Naive thymus-derived CD4-positive, alpha-beta T cell (primary cell): ENCODE measurements at regions of chr10 and their contacts with region 1.

Region 1: DNA sequence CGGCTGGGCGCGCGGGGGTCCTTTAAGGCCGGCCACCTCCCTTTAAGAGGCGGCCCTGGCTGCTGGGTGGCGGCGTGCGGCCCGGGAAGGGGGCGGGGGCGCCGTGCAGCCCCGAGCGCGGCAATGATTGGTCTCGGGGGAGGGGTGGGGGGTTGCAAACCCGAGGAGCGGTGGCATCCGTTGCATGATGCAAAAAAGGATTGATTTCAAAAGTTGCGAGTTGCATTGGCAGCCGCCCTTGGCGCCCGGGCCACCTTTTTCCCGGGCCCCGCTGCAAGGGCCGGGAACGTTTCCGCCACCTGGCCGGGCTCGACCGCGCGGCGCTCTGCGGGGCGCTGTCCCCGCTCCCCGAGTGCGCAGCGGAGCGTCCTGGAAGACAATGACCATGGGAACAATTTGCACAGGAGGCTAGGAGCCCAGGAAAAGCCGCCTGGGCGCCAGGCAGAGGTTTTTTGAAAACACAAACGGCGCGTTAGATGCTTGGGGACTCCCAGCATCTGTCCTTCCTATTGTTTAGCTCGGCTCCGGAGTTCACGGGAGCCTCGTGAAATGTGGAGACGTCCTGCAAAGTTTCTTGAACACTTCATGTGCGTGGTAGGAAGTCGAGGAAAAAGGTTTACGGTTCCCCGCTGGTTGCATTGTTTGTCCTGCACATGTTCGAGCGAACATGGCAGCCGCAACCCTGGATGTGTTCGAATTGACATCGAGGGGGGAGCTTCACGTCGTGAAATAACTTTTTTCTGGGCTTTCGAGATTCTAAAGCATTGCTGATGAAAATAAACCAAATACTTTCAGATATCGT is at the start of gene SEPHS1:
- DNase-seq: peak; percentile 62 to 87 (median 84)
- ATAC-seq: peak; percentile 83
- H3K4me3 ChIP-seq: peak within 1 kb of the TSS; percentile 95
- H3K4me3 Mint-ChIP-seq: peak within 1 kb of the TSS; percentile 92 to 99 (median 96)
- H3K27ac ChIP-seq: peak within 1 kb of the TSS; percentile 84
- H3K27ac Mint-ChIP-seq: peak within 1 kb of the TSS; percentile 90 to 98 (median 97)
- H3K4me1 ChIP-seq: peaks cover 18 to 36% of the 10 kb centered on the region in 2 donors
- H3K4me1 Mint-ChIP-seq: peaks cover 28 to 69% (median 62%) of the 10 kb centered on the region in 7 donors
- H3K27me3 ChIP-seq: no peaks in the 10 kb centered on the region
- H3K27me3 Mint-ChIP-seq: peaks cover 0 to 9% (median 0%) of the 10 kb centered on the region in 5 donors
- total RNA-seq, gene SEPHS1: 23.7 to 57.3 (median 36.5) TPM

Region 2: GRCh38 chr10:12129222-12130111 is 1219.0 kb before region 1 on chr10 and contains the start of gene SEC61A2:
- CTCF ChIA-PET with region 1: no interaction called
- POLR2A ChIA-PET with region 1: interaction called, 4 read pairs
- intact Hi-C with region 1: loop called in 1 of 2 experiments (anchors 5 kb)
- DNase-seq: peak; percentile 89 to 100 (median 95)
- ATAC-seq: peak; percentile 96
- H3K4me3 ChIP-seq: peak within 1 kb of the TSS; percentile 48
- H3K4me3 Mint-ChIP-seq: peak within 1 kb of the TSS; percentile 83 to 93 (median 89)
- H3K27ac ChIP-seq: peak within 1 kb of the TSS; percentile 85
- H3K27ac Mint-ChIP-seq: peak within 1 kb of the TSS; percentile 52 to 93 (median 83)
- H3K4me1 ChIP-seq: peaks cover 5 to 12% of the 10 kb centered on the region in 2 donors
- H3K4me1 Mint-ChIP-seq: peaks cover 12 to 35% (median 26%) of the 10 kb centered on the region in 7 donors
- H3K27me3 ChIP-seq: no peaks in the 10 kb centered on the region
- H3K27me3 Mint-ChIP-seq: no peaks in the 10 kb centered on the region
- total RNA-seq, gene SEC61A2: 7.8 to 15.7 (median 12.7) TPM

Region 3: DNA sequence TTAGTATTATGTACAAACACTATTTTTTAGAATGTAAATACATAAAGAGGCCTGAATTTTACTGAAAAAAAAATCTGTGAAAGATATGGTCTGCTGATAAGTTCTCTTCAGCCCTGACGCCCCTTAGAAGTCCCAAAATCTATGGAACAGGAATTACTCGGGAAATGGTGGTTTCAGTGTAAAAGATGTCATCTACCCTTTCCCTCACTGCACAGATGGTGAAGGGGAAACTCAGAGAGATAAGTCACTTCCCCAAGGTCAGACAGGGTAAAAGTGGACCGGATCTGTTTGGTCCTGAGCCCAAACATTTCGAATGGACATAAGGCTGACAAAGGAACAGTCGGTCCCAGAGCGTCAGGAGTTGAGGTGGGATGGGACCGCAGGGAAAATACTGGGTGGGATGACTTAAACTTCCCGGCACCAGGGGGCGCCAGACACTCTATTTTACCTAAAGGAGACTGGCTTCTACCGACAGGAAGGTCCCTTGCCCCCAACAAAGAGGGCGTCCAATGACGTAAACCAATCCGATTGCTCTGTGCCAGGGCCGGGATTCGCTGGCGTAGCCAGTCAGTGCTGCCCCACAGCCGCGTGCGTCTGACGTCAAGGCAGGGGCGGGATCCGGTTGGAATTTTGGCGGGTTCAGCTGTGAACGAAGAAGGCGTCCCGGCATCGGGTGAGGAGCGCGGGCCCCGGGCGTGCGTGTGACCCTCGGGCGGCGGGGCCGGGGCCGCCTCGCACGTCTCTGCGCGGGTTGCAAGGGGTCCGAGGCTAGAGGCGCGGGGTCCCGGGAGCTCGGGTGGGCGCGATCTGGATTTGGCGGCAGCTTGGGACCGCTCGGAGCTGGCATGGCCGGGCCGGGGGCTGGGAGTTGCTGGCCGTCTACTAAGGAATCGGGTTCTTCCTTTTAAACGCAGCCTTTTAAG is 187.2 kb before region 1 on chr10 and contains the start of gene MCM10:
- CTCF ChIA-PET with region 1: interaction called, 4 read pairs
- POLR2A ChIA-PET with region 1: interaction called, 3 read pairs
- intact Hi-C with region 1: loop called (anchors 1 kb)
- DNase-seq: peak; percentile 86 to 99 (median 96)
- ATAC-seq: peak; percentile 100
- H3K4me3 ChIP-seq: peak within 1 kb of the TSS; percentile 47
- H3K4me3 Mint-ChIP-seq: peak within 1 kb of the TSS; percentile 64 to 93 (median 88)
- H3K27ac ChIP-seq: no peak within 1 kb of the TSS
- H3K27ac Mint-ChIP-seq: peak within 1 kb of the TSS; percentile 44 to 89 (median 74)
- H3K4me1 ChIP-seq: peaks cover 6 to 10% of the 10 kb centered on the region in 2 donors
- H3K4me1 Mint-ChIP-seq: peaks cover 3 to 38% (median 19%) of the 10 kb centered on the region in 7 donors
- H3K27me3 ChIP-seq: no peaks in the 10 kb centered on the region
- H3K27me3 Mint-ChIP-seq: peaks cover 0 to 2% (median 0%) of the 10 kb centered on the region in 5 donors
- total RNA-seq, gene MCM10: 0.08 to 41.8 (median 0.42) TPM

Region 4: DNA sequence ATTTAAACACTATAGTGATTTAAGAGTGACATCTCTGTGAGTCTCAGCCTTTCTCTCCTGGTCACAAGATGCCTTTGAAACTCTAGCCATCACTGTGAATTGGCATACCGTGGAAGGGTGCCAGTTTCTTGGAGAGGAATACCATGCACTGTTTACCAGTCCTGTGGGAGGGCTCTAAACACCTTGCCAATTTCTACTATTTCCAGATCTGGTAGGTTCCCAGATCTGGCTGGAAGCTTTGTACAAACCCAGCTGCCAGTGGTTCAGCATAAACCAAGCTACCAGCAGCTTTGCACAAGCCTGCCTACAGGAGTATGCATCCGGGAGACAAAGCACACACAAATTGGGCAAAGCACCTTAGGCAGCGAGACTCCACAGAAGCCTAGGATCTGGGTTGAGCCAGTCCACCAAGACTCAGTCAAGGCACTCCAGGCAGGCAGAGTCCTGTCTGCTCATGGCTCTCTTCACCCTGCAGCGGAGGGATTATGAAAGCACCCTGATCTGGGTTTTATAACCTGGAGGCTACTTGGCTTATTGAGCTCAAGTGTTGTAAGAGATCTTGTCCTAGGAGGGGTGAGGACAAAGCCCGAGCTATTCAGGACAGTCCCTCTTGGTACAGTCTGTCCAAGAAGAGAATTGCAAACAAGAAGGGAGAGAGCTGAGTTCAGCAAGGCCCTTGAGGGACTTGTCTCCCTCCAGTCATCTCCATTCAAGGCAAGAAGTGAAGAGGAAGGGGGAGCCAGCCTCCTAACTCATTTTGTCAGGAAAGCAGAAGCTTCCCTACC is 163.5 kb before region 1 on chr10:
- CTCF ChIA-PET with region 1: no interaction called
- POLR2A ChIA-PET with region 1: no interaction called
- intact Hi-C with region 1: no loop called
- DNase-seq: no peak
- ATAC-seq: no peak
- H3K4me3 ChIP-seq: no peak overlapping the region
- H3K4me3 Mint-ChIP-seq: no peak overlapping the region
- H3K27ac ChIP-seq: no peak overlapping the region
- H3K27ac Mint-ChIP-seq: no peak overlapping the region
- H3K4me1 ChIP-seq: no peaks in the 10 kb centered on the region
- H3K4me1 Mint-ChIP-seq: no peaks in the 10 kb centered on the region
- H3K27me3 ChIP-seq: no peaks in the 10 kb centered on the region
- H3K27me3 Mint-ChIP-seq: no peaks in the 10 kb centered on the region

Region 5: DNA sequence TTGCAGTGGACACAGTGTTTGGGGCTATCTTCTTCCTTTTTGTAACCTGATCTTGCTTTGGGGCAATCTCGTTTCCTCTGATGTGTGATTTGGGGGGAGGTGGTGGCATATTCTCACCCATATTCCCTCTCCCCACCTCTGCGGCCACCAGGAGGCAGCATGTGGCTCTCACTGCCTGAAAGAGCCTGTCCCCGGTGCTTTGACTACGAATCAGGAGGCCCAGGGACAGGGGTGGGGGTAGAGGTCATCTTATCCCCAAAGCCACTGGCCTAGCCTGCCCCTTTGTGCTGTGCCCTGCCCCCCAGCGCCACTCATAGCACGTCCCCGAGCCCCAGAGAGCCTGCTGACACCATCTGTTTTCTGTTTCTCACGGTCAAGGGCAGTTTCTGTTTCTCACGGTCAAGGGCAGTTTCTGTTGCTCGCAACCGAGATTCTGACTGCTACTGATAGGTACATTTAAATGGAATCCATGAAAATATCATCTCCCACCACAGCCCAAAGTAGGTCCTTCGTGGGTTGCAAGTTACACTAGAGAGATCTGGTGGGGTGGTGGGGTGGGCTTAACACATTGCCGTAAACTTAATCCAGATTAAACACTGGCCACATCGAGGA is 76.8 kb before region 1 on chr10:
- CTCF ChIA-PET with region 1: interaction called, 9 read pairs
- POLR2A ChIA-PET with region 1: interaction called, 5 read pairs
- intact Hi-C with region 1: loop called in 1 of 2 experiments (anchors 1 kb)
- DNase-seq: peak; percentile 21 to 57 (median 47)
- ATAC-seq: peak; percentile 77
- H3K4me3 ChIP-seq: no peak overlapping the region
- H3K4me3 Mint-ChIP-seq: no peak overlapping the region
- H3K27ac ChIP-seq: no peak overlapping the region
- H3K27ac Mint-ChIP-seq: peak overlapping the region in 3 of 9 donors; percentile 39 to 45 (median 43)
- H3K4me1 ChIP-seq: peaks cover 0 to 7% of the 10 kb centered on the region in 2 donors
- H3K4me1 Mint-ChIP-seq: peaks cover 0 to 16% (median 6%) of the 10 kb centered on the region in 7 donors
- H3K27me3 ChIP-seq: no peaks in the 10 kb centered on the region
- H3K27me3 Mint-ChIP-seq: no peaks in the 10 kb centered on the region

Region 6: GRCh38 chr10:13327534-13327933 is 20.9 kb before region 1 on chr10:
- CTCF ChIA-PET with region 1: no interaction called
- POLR2A ChIA-PET with region 1: no interaction called
- intact Hi-C with region 1: loop called in 1 of 2 experiments (anchors 2 kb)
- DNase-seq: no peak
- ATAC-seq: no peak
- H3K4me3 ChIP-seq: no peak overlapping the region
- H3K4me3 Mint-ChIP-seq: no peak overlapping the region
- H3K27ac ChIP-seq: no peak overlapping the region
- H3K27ac Mint-ChIP-seq: peak overlapping the region in 2 of 9 donors; percentile 34 to 59
- H3K4me1 ChIP-seq: no peaks in the 10 kb centered on the region
- H3K4me1 Mint-ChIP-seq: peaks cover 0 to 3% (median 0%) of the 10 kb centered on the region in 7 donors
- H3K27me3 ChIP-seq: no peaks in the 10 kb centered on the region
- H3K27me3 Mint-ChIP-seq: no peaks in the 10 kb centered on the region

Region 7: DNA sequence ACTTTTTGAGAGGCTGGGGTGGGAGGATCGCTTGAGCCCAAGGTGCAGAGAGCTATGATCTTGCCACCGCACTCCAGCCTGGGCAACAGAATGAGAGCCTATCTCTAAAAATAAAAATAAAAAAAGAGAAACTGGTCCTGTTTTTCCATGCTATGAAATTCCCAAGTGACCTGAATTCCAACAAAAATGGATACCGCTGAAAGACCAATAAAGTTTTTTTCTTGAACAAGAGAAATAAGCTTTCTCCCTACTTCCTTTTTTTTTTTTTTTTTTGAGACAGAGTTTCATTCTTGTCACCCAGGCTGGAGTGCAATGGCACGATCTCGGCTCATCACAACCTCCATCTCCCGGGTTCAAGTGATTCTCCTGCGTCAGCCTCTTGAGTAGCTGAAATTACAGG is 12.2 kb after region 1 on chr10:
- CTCF ChIA-PET with region 1: no interaction called
- POLR2A ChIA-PET with region 1: no interaction called
- intact Hi-C with region 1: no loop called
- DNase-seq: no peak
- ATAC-seq: no peak
- H3K4me3 ChIP-seq: no peak overlapping the region
- H3K4me3 Mint-ChIP-seq: no peak overlapping the region
- H3K27ac ChIP-seq: no peak overlapping the region
- H3K27ac Mint-ChIP-seq: no peak overlapping the region
- H3K4me1 ChIP-seq: no peaks in the 10 kb centered on the region
- H3K4me1 Mint-ChIP-seq: no peaks in the 10 kb centered on the region
- H3K27me3 ChIP-seq: no peaks in the 10 kb centered on the region
- H3K27me3 Mint-ChIP-seq: peaks cover 0 to 10% (median 5%) of the 10 kb centered on the region in 5 donors

Region 8: DNA sequence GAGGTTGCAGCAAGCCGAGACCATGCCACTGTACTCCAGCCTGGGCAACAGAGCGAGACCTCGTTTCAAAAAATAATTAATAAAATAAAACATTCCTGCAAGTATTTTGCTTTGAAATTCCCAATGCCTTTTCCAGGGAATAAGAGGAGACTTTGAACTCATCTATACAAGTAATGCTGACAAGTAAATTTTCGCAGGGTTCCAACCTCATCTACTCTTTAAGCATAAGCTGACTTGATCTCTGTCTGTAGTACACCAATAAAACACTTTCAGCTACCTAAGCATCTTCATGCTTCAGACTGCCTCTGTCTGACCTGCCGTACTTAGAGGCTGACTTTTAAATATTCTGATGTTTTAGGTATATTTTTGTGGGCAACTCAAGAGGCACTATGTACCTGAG is 194.1 kb after region 1 on chr10:
- CTCF ChIA-PET with region 1: no interaction called
- POLR2A ChIA-PET with region 1: no interaction called
- intact Hi-C with region 1: no loop called
- DNase-seq: no peak
- ATAC-seq: no peak
- H3K4me3 ChIP-seq: no peak overlapping the region
- H3K4me3 Mint-ChIP-seq: no peak overlapping the region
- H3K27ac ChIP-seq: no peak overlapping the region
- H3K27ac Mint-ChIP-seq: no peak overlapping the region
- H3K4me1 ChIP-seq: no peaks in the 10 kb centered on the region
- H3K4me1 Mint-ChIP-seq: no peaks in the 10 kb centered on the region
- H3K27me3 ChIP-seq: no peaks in the 10 kb centered on the region
- H3K27me3 Mint-ChIP-seq: peaks cover 20 to 70% (median 61%) of the 10 kb centered on the region in 5 donors

Region 9: GRCh38 chr10:14185316-14186045 is 837.1 kb after region 1 on chr10:
- CTCF ChIA-PET with region 1: no interaction called
- POLR2A ChIA-PET with region 1: no interaction called
- intact Hi-C with region 1: loop called in 1 of 2 experiments (anchors 2 kb)
- DNase-seq: peak in 4 of 9 donors; percentile 30 to 75 (median 74)
- ATAC-seq: peak; percentile 87
- H3K4me3 ChIP-seq: peak overlapping the region; percentile 37
- H3K4me3 Mint-ChIP-seq: peak overlapping the region; percentile 18 to 88 (median 77)
- H3K27ac ChIP-seq: peak overlapping the region; percentile 61
- H3K27ac Mint-ChIP-seq: peak overlapping the region; percentile 88 to 98 (median 95)
- H3K4me1 ChIP-seq: peaks cover 0 to 12% of the 10 kb centered on the region in 2 donors
- H3K4me1 Mint-ChIP-seq: peaks cover 12 to 35% (median 22%) of the 10 kb centered on the region in 7 donors
- H3K27me3 ChIP-seq: peaks cover 0 to 5% of the 10 kb centered on the region in 2 donors
- H3K27me3 Mint-ChIP-seq: peaks cover 17 to 69% (median 21%) of the 10 kb centered on the region in 5 donors

Region 10: GRCh38 chr10:14954001-14954770 is 1605.8 kb after region 1 on chr10 and contains the start of gene DCLRE1C:
- CTCF ChIA-PET with region 1: no interaction called
- POLR2A ChIA-PET with region 1: no interaction called
- intact Hi-C with region 1: loop called (anchors 1 to 5 kb)
- DNase-seq: peak; percentile 70 to 89 (median 87)
- ATAC-seq: peak; percentile 90
- H3K4me3 ChIP-seq: peak within 1 kb of the TSS; percentile 97
- H3K4me3 Mint-ChIP-seq: peak within 1 kb of the TSS; percentile 89 to 96 (median 92)
- H3K27ac ChIP-seq: peak within 1 kb of the TSS; percentile 78
- H3K27ac Mint-ChIP-seq: peak within 1 kb of the TSS; percentile 91 to 97 (median 96)
- H3K4me1 ChIP-seq: peaks cover 29 to 32% of the 10 kb centered on the region in 2 donors
- H3K4me1 Mint-ChIP-seq: peaks cover 29 to 69% (median 65%) of the 10 kb centered on the region in 7 donors
- H3K27me3 ChIP-seq: no peaks in the 10 kb centered on the region
- H3K27me3 Mint-ChIP-seq: no peaks in the 10 kb centered on the region
- total RNA-seq, gene DCLRE1C: 16.4 to 38.7 (median 24.2) TPM